ENCODE measurements at regions of chr5 and their contacts with region 1.

Region 1: DNA sequence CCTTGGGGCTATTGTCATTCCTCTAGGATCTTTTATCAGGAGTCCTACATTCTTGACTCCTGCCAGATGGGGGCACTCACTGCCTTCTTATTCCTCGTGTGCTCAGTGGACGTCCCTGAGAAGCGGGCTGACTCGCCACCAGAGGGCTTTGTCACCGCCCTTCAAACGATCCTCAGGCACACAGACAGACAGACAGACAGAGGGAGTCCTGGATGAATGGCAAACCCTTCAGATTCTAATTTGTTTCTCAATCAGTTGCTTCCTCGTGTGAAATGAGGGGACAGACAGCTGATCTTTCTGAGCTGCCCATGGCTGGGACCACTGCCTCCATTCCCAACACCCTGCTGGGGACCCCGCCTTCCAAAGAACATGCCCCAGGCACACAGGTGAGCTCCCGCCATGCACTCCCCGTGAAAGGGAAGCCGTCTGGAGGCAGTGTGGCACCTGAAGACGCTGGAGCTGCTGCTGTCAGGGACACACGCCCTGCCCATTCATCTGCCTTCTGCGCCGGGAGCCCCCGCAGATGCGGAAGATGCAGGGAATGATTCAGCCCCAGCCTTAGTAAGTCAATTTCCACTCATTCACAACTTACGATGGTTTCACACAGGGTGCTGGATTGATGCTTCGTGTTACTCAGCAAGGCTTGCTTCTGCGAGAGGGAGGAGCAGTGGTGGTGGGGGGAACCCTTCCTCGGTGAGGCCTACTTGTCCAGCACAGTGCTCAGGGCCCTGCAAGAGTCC is 24.9 kb upstream of the SH3PXD2B start:
- DNase-seq: peak; percentile 98
- H3K4me3 Mint-ChIP-seq: no peak overlapping the region
- H3K27ac Mint-ChIP-seq: no peak overlapping the region
- H3K4me1 Mint-ChIP-seq: peaks cover 25% of the 10 kb centered on the region
- H3K27me3 Mint-ChIP-seq: no peaks in the 10 kb centered on the region
- CTCF ChIP-seq: peak; percentile 92

Region 2: DNA sequence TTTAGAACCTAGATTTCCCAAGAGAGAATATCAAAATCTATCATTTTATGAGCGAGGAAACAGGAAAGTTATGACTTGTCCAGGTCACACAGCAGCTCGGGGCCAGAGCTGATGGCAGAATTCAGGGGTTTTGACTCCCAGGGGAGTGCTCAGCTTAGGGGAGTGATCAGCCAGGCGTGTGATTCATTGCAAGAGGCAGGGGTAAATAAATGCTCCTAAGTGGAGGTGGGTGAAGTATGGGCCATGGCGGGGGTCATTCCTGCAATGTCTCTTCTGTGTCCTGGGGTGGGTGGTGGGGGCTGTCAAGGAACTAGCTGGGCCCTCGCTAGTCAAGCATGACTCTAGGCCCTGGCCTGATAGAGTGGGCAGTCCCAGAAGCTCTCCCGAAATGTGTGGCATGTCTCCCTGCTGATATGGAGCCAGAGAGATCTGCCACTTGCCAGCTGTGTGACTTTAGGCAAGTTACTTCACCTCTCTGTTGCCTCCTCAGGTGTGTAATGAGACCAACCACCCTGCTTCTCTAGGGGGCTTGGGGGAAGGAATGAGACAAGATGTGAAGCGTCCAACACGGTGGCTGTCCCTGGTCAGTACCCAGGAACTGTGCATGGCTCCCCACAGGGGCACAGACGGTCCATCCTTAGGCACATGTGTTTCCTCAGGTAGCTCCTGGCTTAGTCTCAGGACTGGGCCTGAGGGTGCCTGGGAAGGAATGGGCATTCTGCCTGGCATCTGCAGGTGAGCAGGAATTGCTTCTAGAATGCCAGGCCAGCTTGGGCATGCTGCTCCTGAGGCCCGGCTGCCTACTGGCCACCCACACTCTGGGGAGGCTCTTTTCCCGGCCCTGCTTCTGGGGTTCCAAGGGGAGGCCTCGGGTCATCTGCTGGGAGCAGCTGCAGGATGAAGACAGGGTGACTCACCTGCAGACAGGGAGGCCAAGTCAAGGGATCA is 11.6 kb after region 1 on chr5:
- CTCF ChIA-PET with region 1: interaction called, 24 read pairs
- POLR2A ChIA-PET with region 1: interaction called, 5 read pairs
- intact Hi-C with region 1: no loop called
- DNase-seq: peak; percentile 68
- H3K4me3 Mint-ChIP-seq: no peak overlapping the region
- H3K27ac Mint-ChIP-seq: no peak overlapping the region
- H3K4me1 Mint-ChIP-seq: no peaks in the 10 kb centered on the region
- H3K27me3 Mint-ChIP-seq: peaks cover 19% of the 10 kb centered on the region
- CTCF ChIP-seq: no peak

Region 3: GRCh38 chr5:172571413-172571812 is 92.2 kb after region 1 on chr5:
- CTCF ChIA-PET with region 1: interaction called, 10 read pairs
- POLR2A ChIA-PET with region 1: no interaction called
- intact Hi-C with region 1: no loop called
- DNase-seq: no peak
- H3K4me3 Mint-ChIP-seq: no peak overlapping the region
- H3K27ac Mint-ChIP-seq: no peak overlapping the region
- H3K4me1 Mint-ChIP-seq: peaks cover 6% of the 10 kb centered on the region
- H3K27me3 Mint-ChIP-seq: peaks cover 39% of the 10 kb centered on the region
- CTCF ChIP-seq: no peak

Region 4: DNA sequence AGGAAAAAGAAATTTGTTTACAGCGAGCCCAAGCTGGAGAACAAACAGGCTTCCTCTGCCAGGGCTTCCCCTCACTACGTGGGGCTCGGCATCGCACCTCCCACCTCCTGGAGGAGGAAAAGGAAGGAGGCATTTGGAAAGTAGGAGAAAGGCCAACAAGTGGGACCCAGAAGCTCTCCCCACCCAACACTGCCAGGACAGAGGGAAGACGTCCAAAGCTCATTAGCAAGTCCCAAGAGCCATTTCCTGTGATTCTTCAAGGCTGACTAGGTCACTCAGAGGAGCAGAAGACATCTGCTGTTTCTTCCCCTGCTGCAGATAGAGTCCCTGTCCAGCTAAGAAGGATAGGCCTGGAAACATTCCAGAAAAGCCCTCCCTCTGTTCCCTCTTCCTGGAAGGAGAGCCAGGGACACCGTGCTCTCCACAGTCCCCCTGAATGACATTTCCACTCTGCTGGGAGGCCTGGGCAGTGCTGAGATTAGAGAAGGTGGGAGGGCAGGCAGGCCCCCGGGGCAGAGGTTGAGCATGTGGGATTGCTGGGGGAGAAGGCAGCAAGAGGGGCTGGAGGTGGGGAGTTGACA is 104.8 kb after region 1 on chr5:
- CTCF ChIA-PET with region 1: interaction called, 13 read pairs
- POLR2A ChIA-PET with region 1: interaction called, 4 read pairs
- intact Hi-C with region 1: loop called (anchors 1 kb)
- DNase-seq: no peak
- H3K4me3 Mint-ChIP-seq: no peak overlapping the region
- H3K27ac Mint-ChIP-seq: no peak overlapping the region
- H3K4me1 Mint-ChIP-seq: no peaks in the 10 kb centered on the region
- H3K27me3 Mint-ChIP-seq: peaks cover 65% of the 10 kb centered on the region
- CTCF ChIP-seq: no peak

Region 5: GRCh38 chr5:172640822-172641358 is 161.7 kb after region 1 on chr5 and contains the start of gene NEURL1B:
- CTCF ChIA-PET with region 1: interaction called, 14 read pairs
- POLR2A ChIA-PET with region 1: interaction called, 4 read pairs
- intact Hi-C with region 1: loop called (anchors 1 kb)
- DNase-seq: peak; percentile 89
- H3K4me3 Mint-ChIP-seq: peak within 1 kb of the TSS; percentile 59
- H3K27ac Mint-ChIP-seq: no peak within 1 kb of the TSS
- H3K4me1 Mint-ChIP-seq: peaks cover 45% of the 10 kb centered on the region
- H3K27me3 Mint-ChIP-seq: no peaks in the 10 kb centered on the region
- CTCF ChIP-seq: no peak
- total RNA-seq, gene NEURL1B: 4.8 and 7.6 TPM in 2 replicates

Region 6: DNA sequence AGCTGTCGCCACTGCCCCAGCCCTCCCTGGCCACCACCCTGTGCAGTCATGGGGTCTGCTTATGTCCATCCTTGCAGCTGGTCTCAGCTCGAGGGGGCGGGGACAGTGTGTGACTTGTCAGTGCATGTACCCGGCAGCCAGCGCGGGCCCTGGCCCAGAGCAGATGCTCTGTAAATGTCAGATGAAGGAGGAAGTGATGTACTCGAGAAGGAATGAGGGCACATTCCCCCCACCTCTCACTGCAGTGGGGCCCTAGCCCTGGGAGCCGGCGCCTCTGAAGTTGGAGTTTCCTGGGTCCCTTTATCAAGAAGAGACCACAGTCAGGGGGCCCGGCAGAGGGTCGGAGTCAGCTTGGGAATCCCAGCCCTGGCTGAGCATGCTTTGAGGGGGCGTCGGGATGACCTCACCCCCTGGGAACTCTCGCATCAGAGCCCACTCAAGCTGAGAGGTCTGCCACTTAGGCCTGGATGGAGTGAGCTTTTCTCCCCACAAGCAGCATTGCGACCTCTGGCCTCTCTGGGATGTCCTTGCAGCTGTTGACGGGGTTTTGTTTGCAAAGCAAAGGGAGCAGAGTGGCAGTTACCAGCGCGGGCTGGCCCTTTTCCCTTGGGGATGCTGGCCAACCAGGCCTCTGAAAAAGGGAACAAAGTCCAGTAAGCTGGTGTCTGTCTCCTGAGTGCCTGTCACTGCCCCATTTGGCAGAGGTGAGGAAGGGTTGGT is 180.9 kb after region 1 on chr5:
- CTCF ChIA-PET with region 1: interaction called, 10 read pairs
- POLR2A ChIA-PET with region 1: no interaction called
- intact Hi-C with region 1: no loop called
- DNase-seq: no peak
- H3K4me3 Mint-ChIP-seq: no peak overlapping the region
- H3K27ac Mint-ChIP-seq: peak overlapping the region; percentile 3
- H3K4me1 Mint-ChIP-seq: peaks cover 15% of the 10 kb centered on the region
- H3K27me3 Mint-ChIP-seq: no peaks in the 10 kb centered on the region
- CTCF ChIP-seq: no peak

Region 7: DNA sequence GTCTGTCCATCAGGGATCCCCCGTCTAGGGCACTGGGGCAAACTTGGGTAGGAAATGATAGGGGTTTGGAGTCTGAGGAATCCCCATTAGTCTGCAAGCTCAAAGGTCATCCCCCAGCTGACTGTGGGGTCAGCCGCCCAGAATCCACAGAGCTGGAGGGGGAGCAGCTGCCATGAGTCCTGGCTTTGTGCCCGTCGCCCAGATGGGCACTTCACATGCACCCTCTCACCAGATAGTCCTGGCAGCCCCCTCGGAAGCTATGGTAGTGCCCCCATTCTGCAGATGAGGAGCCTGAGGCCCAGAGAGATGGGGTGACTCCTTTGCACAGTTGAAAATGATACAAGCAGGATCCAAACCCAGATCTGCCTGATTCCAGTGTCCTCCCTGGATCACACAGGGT is 444.3 kb after region 1 on chr5:
- CTCF ChIA-PET with region 1: no interaction called
- POLR2A ChIA-PET with region 1: no interaction called
- intact Hi-C with region 1: no loop called
- DNase-seq: no peak
- H3K4me3 Mint-ChIP-seq: no peak overlapping the region
- H3K27ac Mint-ChIP-seq: no peak overlapping the region
- H3K4me1 Mint-ChIP-seq: peaks cover 20% of the 10 kb centered on the region
- H3K27me3 Mint-ChIP-seq: no peaks in the 10 kb centered on the region
- CTCF ChIP-seq: no peak